ENCODE measurements at regions of chr18 and their contacts with region 1.

Region 1: GRCh38 chr18:158128-159036 is at the start of gene USP14:
- DNase-seq: peak; percentile 88 to 98 (median 96)
- ATAC-seq: peak; percentile 87
- H3K4me3 Mint-ChIP-seq: peak within 1 kb of the TSS; percentile 87 to 98 (median 93)
- H3K27ac Mint-ChIP-seq: peak within 1 kb of the TSS; percentile 76 to 97 (median 93)
- H3K4me1 Mint-ChIP-seq: peaks cover 15 to 39% (median 39%) of the 10 kb centered on the region in 4 donors
- H3K27me3 Mint-ChIP-seq: no peaks in the 10 kb centered on the region
- polyA plus RNA-seq, gene USP14: 38.0 to 39.0 (median 38.9) TPM

Region 2: GRCh38 chr18:172361-172760 is 14.0 kb after region 1 on chr18:
- POLR2A ChIA-PET with region 1: no interaction called
- DNase-seq: no peak
- ATAC-seq: no peak
- H3K4me3 Mint-ChIP-seq: no peak overlapping the region
- H3K27ac Mint-ChIP-seq: peak overlapping the region in 2 of 10 donors; percentile 44 to 76
- H3K4me1 Mint-ChIP-seq: peaks cover 10 to 27% (median 16%) of the 10 kb centered on the region in 4 donors
- H3K27me3 Mint-ChIP-seq: no peaks in the 10 kb centered on the region

Region 3: DNA sequence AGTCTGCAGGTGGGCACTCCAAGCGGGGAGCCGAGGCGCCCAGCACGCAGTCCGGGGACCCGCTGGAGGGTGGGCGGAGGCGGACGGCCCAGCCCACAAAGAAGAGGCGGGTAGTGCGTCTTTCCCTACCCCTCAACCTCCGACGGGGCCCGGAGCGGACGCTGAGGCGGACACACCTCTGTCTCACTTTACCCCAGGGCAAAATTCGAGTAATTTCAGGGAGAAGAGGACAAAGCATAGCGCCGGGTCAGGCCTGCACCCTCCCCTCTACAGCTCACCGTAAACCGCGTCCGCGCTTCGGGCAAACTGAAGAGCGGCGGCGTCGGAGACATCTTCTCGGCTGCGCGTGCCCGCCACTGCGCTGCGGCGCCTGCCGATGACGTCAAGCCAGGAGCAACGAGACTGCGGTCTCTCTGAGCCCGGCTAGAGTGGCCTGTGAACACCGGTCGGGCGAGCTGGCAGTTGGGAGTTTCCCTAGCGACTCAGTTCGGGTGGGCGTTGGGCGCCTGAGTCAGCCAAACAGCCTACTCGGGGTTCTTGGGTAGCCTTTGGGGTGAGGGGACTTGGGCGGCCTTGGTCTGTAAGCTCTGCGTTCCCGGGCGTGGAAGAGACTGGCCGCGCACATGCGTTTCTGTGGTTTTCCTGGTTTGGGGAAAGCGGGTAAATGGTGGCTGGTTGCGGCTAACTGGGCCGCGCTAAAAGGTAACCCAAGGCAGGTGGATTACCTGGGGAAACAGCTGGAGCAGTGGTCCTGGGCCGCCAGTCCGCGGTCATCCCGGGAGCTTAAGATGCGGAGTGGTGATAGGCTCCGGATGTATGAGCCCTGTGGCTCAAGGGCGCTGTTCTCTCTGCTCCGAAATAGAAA is 109.5 kb after region 1 on chr18 and contains the start of gene THOC1:
- POLR2A ChIA-PET with region 1: interaction called, 22 read pairs
- DNase-seq: peak; percentile 84 to 95 (median 94)
- ATAC-seq: peak; percentile 93 to 94
- H3K4me3 Mint-ChIP-seq: peak within 1 kb of the TSS; percentile 93 to 100 (median 98)
- H3K27ac Mint-ChIP-seq: peak within 1 kb of the TSS; percentile 93 to 100 (median 100)
- H3K4me1 Mint-ChIP-seq: peaks cover 15 to 48% (median 45%) of the 10 kb centered on the region in 4 donors
- H3K27me3 Mint-ChIP-seq: no peaks in the 10 kb centered on the region
- polyA plus RNA-seq, gene THOC1: 12.4 to 16.4 (median 15.2) TPM